ENCODE measurements at regions of chr17 and their contacts with region 1.

Region 1: DNA sequence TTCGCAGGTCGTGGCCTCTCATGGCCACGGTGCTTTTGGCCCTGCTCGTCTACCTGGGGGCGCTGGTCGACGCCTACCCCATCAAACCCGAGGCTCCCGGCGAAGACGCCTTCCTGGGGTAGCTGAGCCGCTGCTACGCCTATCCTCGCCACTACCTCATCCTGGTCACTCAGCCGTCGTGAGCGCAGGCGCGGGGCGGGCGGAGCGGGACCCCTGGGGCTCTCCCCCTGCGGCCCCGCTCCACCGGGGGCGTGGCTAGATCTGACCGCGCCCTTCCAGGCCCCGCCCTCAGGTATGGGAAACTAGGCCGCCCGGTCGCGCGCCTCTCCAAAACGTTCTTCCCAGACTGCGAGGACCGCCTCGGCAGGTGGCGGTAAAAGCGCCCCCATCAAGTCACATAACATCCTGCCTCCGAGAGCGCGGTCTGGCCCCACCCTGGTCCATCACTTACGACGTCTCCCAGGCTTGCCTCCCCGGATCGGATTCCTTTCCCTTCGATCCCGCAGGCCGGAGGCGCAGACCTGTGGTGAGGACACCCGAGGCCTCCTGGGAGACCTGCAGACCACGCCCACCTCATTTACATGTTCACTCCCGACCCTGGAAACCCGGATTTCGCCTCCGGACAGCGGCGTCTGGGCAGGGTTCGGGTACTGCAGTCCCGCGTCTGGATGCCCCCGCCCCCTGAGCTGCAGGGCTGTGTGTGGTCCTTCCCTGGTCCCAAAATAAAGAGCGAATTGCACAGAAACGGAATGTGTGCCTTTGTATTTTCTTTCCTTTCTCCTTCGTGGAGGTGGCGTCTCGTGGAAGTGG is 91.5 kb upstream of the TMEM97 start:
- DNase-seq: peak; percentile 41
- H3K4me3 Mint-ChIP-seq: peak overlapping the region; percentile 58
- H3K27ac Mint-ChIP-seq: no peak overlapping the region
- H3K4me1 Mint-ChIP-seq: peaks cover 12% of the 10 kb centered on the region
- H3K27me3 Mint-ChIP-seq: peaks cover 59% of the 10 kb centered on the region

Region 2: DNA sequence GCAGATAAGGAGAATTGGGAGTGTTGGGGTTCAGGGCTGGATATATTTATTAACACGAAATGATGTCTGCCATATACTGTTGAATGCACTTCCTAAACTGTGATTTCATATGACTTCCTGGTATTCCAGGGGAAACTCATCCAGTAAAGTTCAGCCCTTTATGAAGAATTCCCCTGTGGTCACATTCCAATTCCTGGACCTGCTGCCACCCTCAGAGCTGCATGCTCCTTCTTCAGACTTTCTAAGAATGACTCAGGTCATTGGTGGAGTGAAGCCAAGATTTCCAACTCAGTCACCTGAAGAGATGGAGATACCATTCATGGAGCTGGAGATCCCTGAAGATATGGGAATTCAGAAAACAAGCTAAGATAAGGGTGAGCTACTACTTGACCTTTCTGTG is 22.8 kb before region 1 on chr17:
- CTCF ChIA-PET with region 1: no interaction called
- DNase-seq: no peak
- H3K4me3 Mint-ChIP-seq: no peak overlapping the region
- H3K27ac Mint-ChIP-seq: no peak overlapping the region
- H3K4me1 Mint-ChIP-seq: no peaks in the 10 kb centered on the region
- H3K27me3 Mint-ChIP-seq: peaks cover 16% of the 10 kb centered on the region

Region 3: GRCh38 chr17:28252436-28252835 is 24.9 kb after region 1 on chr17:
- CTCF ChIA-PET with region 1: interaction called, 20 read pairs
- DNase-seq: no peak
- H3K4me3 Mint-ChIP-seq: no peak overlapping the region
- H3K27ac Mint-ChIP-seq: no peak overlapping the region
- H3K4me1 Mint-ChIP-seq: peaks cover 10% of the 10 kb centered on the region
- H3K27me3 Mint-ChIP-seq: peaks cover 63% of the 10 kb centered on the region

Region 4: GRCh38 chr17:28443901-28444638 is 216.5 kb after region 1 on chr17:
- CTCF ChIA-PET with region 1: no interaction called
- DNase-seq: no peak
- H3K4me3 Mint-ChIP-seq: no peak overlapping the region
- H3K27ac Mint-ChIP-seq: no peak overlapping the region
- H3K4me1 Mint-ChIP-seq: no peaks in the 10 kb centered on the region
- H3K27me3 Mint-ChIP-seq: peaks cover 18% of the 10 kb centered on the region

Measured in activated naive CD4-positive, alpha-beta T cell treated with anti-CD3 and anti-CD28 coated beads, Interleukin-2, amount 10 ng/mL, durations not matched to agents 7 days and 5 days (primary cell).